Vagina (tissue), 2 donors: ENCODE measurements at regions of chr7 and their contacts with region 1.

Region 1: GRCh38 chr7:116929914-116930913 is 23.1 kb upstream of the ST7 start:
- DNase-seq: peak in 1 of 2 donors; percentile 90
- H3K4me3 ChIP-seq: no peak overlapping the region
- H3K27ac ChIP-seq: no peak overlapping the region
- H3K4me1 ChIP-seq: no peaks in the 10 kb centered on the region
- H3K27me3 ChIP-seq: no peaks in the 10 kb centered on the region
- CTCF ChIP-seq: peak; percentile 74 to 88 (median 85)
- POLR2A ChIP-seq: no peak

Region 2: GRCh38 chr7:117127585-117128168 is 197.5 kb after region 1 on chr7:
- intact Hi-C with region 1: loop called (anchors 5 kb)
- DNase-seq: no peak
- H3K4me3 ChIP-seq: no peak overlapping the region
- H3K27ac ChIP-seq: no peak overlapping the region
- H3K4me1 ChIP-seq: no peaks in the 10 kb centered on the region
- H3K27me3 ChIP-seq: no peaks in the 10 kb centered on the region
- CTCF ChIP-seq: peak; percentile 41 to 71 (median 62)
- POLR2A ChIP-seq: no peak